ENCODE measurements at regions of chr5 and their contacts with region 1.

Region 1: GRCh38 chr5:15383469-15383868 is 116.5 kb upstream of the FBXL7 start:
- DNase-seq: no peak
- H3K4me3 ChIP-seq: no peak overlapping the region
- H3K27ac ChIP-seq: no peak overlapping the region
- H3K4me1 ChIP-seq: no peaks in the 10 kb centered on the region
- H3K27me3 ChIP-seq: no peaks in the 10 kb centered on the region
- CTCF ChIP-seq: peak in 2 of 4 experiments; percentile 34 to 38
- POLR2A ChIP-seq: no peak

Region 2: DNA sequence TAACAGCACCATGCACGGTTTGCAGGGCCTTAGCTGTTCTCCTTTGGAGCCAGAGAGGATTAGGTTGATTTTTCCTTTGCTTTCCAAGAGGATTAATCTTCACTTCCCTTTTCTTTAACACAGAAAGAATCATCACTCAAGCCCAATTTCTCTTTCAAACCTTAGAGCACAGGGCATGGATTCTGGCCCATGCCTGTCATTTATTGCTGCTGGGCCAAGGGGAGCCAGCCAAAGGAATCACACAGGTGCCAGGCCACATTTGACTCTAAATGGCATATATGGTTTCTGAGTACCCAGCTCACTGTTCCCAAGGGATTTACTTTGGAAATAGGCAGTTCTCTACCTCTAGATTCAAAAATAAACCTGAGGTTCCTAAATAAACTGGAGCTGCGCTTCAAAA is 174.8 kb after region 1 on chr5:
- intact Hi-C with region 1: no loop called
- DNase-seq: peak; percentile 10
- H3K4me3 ChIP-seq: no peak overlapping the region
- H3K27ac ChIP-seq: no peak overlapping the region
- H3K4me1 ChIP-seq: no peaks in the 10 kb centered on the region
- H3K27me3 ChIP-seq: no peaks in the 10 kb centered on the region
- CTCF ChIP-seq: no peak
- POLR2A ChIP-seq: no peak

Region 3: GRCh38 chr5:15995341-15996052 is 612.0 kb after region 1 on chr5:
- intact Hi-C with region 1: loop called (anchors 10 kb)
- DNase-seq: no peak
- H3K4me3 ChIP-seq: no peak overlapping the region
- H3K27ac ChIP-seq: no peak overlapping the region
- H3K4me1 ChIP-seq: no peaks in the 10 kb centered on the region
- H3K27me3 ChIP-seq: no peaks in the 10 kb centered on the region
- CTCF ChIP-seq: peak in 3 of 4 experiments; percentile 38 to 43 (median 42)
- POLR2A ChIP-seq: no peak